Caco-2 (cell line): ENCODE measurements at regions of chr20 and their contacts with region 1.

Region 1: GRCh38 chr20:41738604-41739206 is 120.5 kb upstream of the CHD6 start:
- DNase-seq: peak; percentile 76 to 82
- H3K4me3 ChIP-seq: no peak overlapping the region
- H3K4me3 Mint-ChIP-seq: no peak overlapping the region
- H3K27ac Mint-ChIP-seq: no peak overlapping the region
- H3K4me1 ChIP-seq: peaks cover 9% of the 10 kb centered on the region; the same call in 1 of the 2 replicates
- H3K4me1 Mint-ChIP-seq: no peaks in the 10 kb centered on the region
- H3K27me3 ChIP-seq: no peaks in the 10 kb centered on the region
- H3K27me3 Mint-ChIP-seq: peaks cover 5% of the 10 kb centered on the region
- CTCF ChIP-seq: peak; percentile 97 to 100

Region 2: GRCh38 chr20:41483553-41483930 is 255.2 kb before region 1 on chr20:
- CTCF ChIA-PET with region 1: no interaction called
- POLR2A ChIA-PET with region 1: no interaction called
- intact Hi-C with region 1: no loop called
- DNase-seq: no peak
- H3K4me3 ChIP-seq: no peak overlapping the region
- H3K4me3 Mint-ChIP-seq: no peak overlapping the region
- H3K27ac Mint-ChIP-seq: no peak overlapping the region
- H3K4me1 ChIP-seq: no peaks in the 10 kb centered on the region
- H3K4me1 Mint-ChIP-seq: no peaks in the 10 kb centered on the region
- H3K27me3 ChIP-seq: no peaks in the 10 kb centered on the region
- H3K27me3 Mint-ChIP-seq: no peaks in the 10 kb centered on the region
- CTCF ChIP-seq: no peak

Region 3: DNA sequence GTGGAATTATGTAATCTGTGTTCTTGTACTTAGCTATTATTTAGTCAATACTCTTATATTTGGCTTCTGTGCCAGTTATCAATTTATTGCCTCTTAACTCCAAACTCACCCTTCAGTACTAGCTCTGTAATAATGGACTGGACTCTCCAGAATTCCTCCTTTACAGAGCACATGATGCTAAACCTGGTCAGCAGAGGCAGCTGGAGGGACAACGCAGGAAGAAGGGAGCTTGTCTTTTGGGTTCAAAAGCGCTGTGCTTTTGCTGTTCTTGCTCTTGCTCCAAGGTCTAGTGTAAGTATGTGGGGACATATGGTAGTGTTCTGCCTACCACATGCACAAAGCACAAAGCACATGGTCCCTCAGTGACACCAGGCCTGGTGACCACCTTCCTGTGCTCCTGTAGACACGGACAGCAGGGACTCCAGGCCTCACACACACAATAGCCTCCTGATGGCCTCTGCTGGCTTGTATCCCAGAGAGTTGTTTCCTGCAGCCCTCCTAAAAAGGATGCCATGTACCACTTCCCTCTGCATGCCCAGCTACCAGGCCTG is 166.6 kb before region 1 on chr20:
- CTCF ChIA-PET with region 1: interaction called, 7 read pairs
- POLR2A ChIA-PET with region 1: no interaction called
- intact Hi-C with region 1: loop called (anchors 1 kb)
- DNase-seq: peak; percentile 71 to 73
- H3K4me3 ChIP-seq: no peak overlapping the region
- H3K4me3 Mint-ChIP-seq: no peak overlapping the region
- H3K27ac Mint-ChIP-seq: no peak overlapping the region
- H3K4me1 ChIP-seq: peaks cover 19% of the 10 kb centered on the region
- H3K4me1 Mint-ChIP-seq: peaks cover 16% of the 10 kb centered on the region
- H3K27me3 ChIP-seq: no peaks in the 10 kb centered on the region
- H3K27me3 Mint-ChIP-seq: no peaks in the 10 kb centered on the region
- CTCF ChIP-seq: peak; percentile 83 to 91

Region 4: DNA sequence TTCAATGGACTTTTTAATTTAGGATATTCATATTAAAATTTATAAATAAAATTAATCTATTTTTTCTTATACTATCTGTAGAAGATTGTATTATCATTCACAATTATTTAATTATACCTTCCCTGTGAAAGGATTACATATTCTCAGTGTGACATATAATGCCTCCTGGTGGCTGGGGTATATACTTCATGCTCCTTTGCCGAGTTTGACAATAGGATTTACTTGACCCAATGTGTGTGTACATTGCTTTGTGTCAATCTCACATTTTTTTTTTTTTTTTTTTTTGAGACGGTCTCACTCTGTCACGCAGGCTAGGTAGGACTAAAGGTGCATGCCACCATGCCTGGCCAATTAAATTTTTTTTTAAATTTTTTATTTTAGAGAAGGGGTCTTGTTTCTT is 109.5 kb after region 1 on chr20:
- CTCF ChIA-PET with region 1: no interaction called
- POLR2A ChIA-PET with region 1: no interaction called
- intact Hi-C with region 1: loop called (anchors 1 kb)
- DNase-seq: peak in 1 of 2 experiments; percentile 29
- H3K4me3 ChIP-seq: no peak overlapping the region
- H3K4me3 Mint-ChIP-seq: no peak overlapping the region
- H3K27ac Mint-ChIP-seq: no peak overlapping the region
- H3K4me1 ChIP-seq: no peaks in the 10 kb centered on the region
- H3K4me1 Mint-ChIP-seq: no peaks in the 10 kb centered on the region
- H3K27me3 ChIP-seq: peaks cover 2% of the 10 kb centered on the region; the same call in 1 of the 2 replicates
- H3K27me3 Mint-ChIP-seq: peaks cover 17% of the 10 kb centered on the region
- CTCF ChIP-seq: peak; percentile 28 to 40

Region 5: DNA sequence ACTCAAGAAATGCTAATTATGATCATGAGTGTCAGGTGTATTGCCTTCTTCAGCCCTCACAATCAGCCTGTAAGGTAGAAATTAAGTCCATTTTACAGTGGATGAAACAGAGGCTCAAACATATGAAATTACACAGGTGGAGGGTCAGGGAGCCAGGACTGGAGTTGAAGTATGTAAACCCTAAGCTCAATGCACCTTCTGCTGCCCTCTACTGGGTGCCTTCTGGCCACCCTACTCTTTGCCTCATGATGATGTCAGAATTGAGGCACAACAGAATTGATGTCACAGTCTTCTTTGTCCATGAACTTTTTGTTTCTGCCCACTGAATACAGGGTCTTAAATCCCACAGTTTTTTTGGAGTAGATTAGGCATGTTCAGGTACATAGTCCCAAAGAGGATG is 280.2 kb after region 1 on chr20:
- CTCF ChIA-PET with region 1: interaction called, 7 read pairs
- POLR2A ChIA-PET with region 1: no interaction called
- intact Hi-C with region 1: loop called (anchors 10 kb)
- DNase-seq: peak in 1 of 2 experiments; percentile 34
- H3K4me3 ChIP-seq: no peak overlapping the region
- H3K4me3 Mint-ChIP-seq: no peak overlapping the region
- H3K27ac Mint-ChIP-seq: no peak overlapping the region
- H3K4me1 ChIP-seq: no peaks in the 10 kb centered on the region
- H3K4me1 Mint-ChIP-seq: no peaks in the 10 kb centered on the region
- H3K27me3 ChIP-seq: 0 out of 2 replicates have a peak, but pooled peaks cover 1% of the 10 kb centered on the region
- H3K27me3 Mint-ChIP-seq: peaks cover 2% of the 10 kb centered on the region
- CTCF ChIP-seq: peak; percentile 55 to 69

Region 6: DNA sequence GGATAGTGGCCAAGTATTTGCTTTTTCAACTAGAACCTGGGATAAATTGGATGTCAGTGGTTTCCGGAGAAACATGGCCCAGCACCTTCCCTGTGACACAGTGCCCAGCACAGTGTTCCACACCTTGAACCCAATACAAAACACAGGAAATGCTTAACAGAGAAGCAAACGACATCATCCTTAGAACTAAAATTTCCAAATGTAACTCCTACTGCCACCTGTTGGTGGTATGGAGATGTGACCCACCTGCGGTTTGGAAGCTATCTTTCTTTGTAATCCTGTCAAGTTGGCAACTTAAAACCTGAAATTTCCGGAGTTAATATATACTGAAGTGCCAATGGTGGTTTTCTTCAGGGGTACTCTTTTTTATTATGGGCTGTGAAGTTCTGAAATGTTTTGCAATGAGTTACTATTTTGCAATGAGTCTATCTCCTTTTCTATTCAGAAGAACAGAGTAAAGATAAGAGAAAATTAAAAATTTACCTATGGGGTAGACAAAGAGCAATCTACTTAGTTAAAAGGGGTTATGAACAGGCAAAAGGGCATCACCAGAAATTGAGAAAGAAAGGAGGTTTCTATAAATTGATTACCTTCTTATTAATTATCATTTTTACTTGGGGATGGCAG is 792.2 kb after region 1 on chr20:
- CTCF ChIA-PET with region 1: no interaction called
- POLR2A ChIA-PET with region 1: no interaction called
- intact Hi-C with region 1: loop called (anchors 2 kb)
- DNase-seq: peak in 1 of 2 experiments; percentile 53
- H3K4me3 ChIP-seq: no peak overlapping the region
- H3K4me3 Mint-ChIP-seq: no peak overlapping the region
- H3K27ac Mint-ChIP-seq: no peak overlapping the region
- H3K4me1 ChIP-seq: no peaks in the 10 kb centered on the region
- H3K4me1 Mint-ChIP-seq: no peaks in the 10 kb centered on the region
- H3K27me3 ChIP-seq: no peaks in the 10 kb centered on the region
- H3K27me3 Mint-ChIP-seq: peaks cover 22% of the 10 kb centered on the region
- CTCF ChIP-seq: peak; percentile 82 to 92

Region 7: GRCh38 chr20:43408848-43409576 is 1670.3 kb after region 1 on chr20:
- CTCF ChIA-PET with region 1: interaction called, 3 read pairs
- POLR2A ChIA-PET with region 1: no interaction called
- intact Hi-C with region 1: loop called (anchors 1 kb)
- DNase-seq: peak; percentile 56 to 64
- H3K4me3 ChIP-seq: no peak overlapping the region
- H3K4me3 Mint-ChIP-seq: no peak overlapping the region
- H3K27ac Mint-ChIP-seq: no peak overlapping the region
- H3K4me1 ChIP-seq: no peaks in the 10 kb centered on the region
- H3K4me1 Mint-ChIP-seq: no peaks in the 10 kb centered on the region
- H3K27me3 ChIP-seq: no peaks in the 10 kb centered on the region
- H3K27me3 Mint-ChIP-seq: peaks cover 15% of the 10 kb centered on the region
- CTCF ChIP-seq: peak; percentile 87 to 91